Activated T-helper 2 cell treated with anti-CD3 and anti-CD28 coated beads, Interferon-gamma antibody, Interleukin-2, Interleukin-4, amounts not matched to agents 10 μg/mL and 5 μg/mL and 100 μg/mL, durations not matched to agents 14 hours and 24 hours and 36 hours (primary cell): ENCODE measurements at regions of chr6 and their contacts with region 1.

Region 1: DNA sequence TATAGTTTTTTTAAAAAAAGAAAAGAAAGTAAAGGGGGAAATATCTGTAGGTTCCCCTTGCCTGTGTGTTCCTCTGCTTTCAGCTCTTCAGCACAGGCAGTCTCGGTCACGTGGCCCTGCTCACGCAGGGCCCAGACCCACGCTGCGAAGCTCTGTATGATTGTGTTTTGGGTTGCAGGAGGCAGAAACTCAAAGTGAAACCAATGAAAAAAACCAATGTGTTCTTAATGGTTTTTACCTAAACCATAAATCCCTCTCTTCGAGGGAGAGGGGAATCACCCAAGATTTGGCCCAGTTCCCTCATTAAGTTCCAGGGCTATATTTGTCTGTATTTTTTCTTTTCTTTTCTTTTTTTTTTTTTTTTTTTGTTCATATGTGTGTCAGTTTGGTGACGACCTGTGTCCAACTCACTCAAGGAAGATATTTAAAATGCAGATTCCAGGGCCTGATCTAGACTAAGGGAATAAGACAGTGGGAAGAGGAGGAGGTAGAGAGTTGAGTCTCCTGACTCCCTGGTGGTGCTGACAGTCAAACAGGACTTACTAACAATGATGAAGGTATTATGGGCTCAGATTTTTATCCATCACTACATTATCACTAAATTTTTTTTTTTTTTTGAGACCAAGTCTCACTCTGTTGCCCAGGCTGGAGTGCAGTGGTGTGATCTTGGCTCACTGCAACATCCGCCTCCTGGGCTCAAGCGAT is 33.8 kb upstream of the RREB1 start:
- DNase-seq: peak; percentile 57
- H3K4me3 Mint-ChIP-seq: no peak overlapping the region
- H3K27ac Mint-ChIP-seq: no peak overlapping the region
- H3K4me1 Mint-ChIP-seq: peaks cover 17% of the 10 kb centered on the region
- H3K27me3 Mint-ChIP-seq: peaks cover 60% of the 10 kb centered on the region

Region 2: GRCh38 chr6:6918216-6918983 is 155.6 kb before region 1 on chr6:
- intact Hi-C with region 1: loop called (anchors 2 kb)
- DNase-seq: peak; percentile 24
- H3K4me3 Mint-ChIP-seq: no peak overlapping the region
- H3K27ac Mint-ChIP-seq: peak overlapping the region; percentile 16
- H3K4me1 Mint-ChIP-seq: peaks cover 24% of the 10 kb centered on the region
- H3K27me3 Mint-ChIP-seq: peaks cover 31% of the 10 kb centered on the region

Region 3: GRCh38 chr6:7006515-7007191 is 67.3 kb before region 1 on chr6:
- intact Hi-C with region 1: loop called (anchors 2 kb)
- DNase-seq: no peak
- H3K4me3 Mint-ChIP-seq: no peak overlapping the region
- H3K27ac Mint-ChIP-seq: no peak overlapping the region
- H3K4me1 Mint-ChIP-seq: peaks cover 4% of the 10 kb centered on the region
- H3K27me3 Mint-ChIP-seq: peaks cover 34% of the 10 kb centered on the region

Region 4: GRCh38 chr6:7086488-7086887 is 12.5 kb after region 1 on chr6:
- intact Hi-C with region 1: loop called (anchors 1 kb)
- DNase-seq: no peak
- H3K4me3 Mint-ChIP-seq: peak overlapping the region; percentile 73
- H3K27ac Mint-ChIP-seq: no peak overlapping the region
- H3K4me1 Mint-ChIP-seq: peaks cover 28% of the 10 kb centered on the region
- H3K27me3 Mint-ChIP-seq: peaks cover 41% of the 10 kb centered on the region

Region 5: GRCh38 chr6:7332090-7332745 is 258.2 kb after region 1 on chr6:
- intact Hi-C with region 1: no loop called
- DNase-seq: no peak
- H3K4me3 Mint-ChIP-seq: no peak overlapping the region
- H3K27ac Mint-ChIP-seq: no peak overlapping the region
- H3K4me1 Mint-ChIP-seq: peaks cover 1% of the 10 kb centered on the region
- H3K27me3 Mint-ChIP-seq: peaks cover 19% of the 10 kb centered on the region